A549 (cell line): ENCODE measurements at regions of chr3 and their contacts with region 1.

Region 1: GRCh38 chr3:27681245-27681748 is 40.8 kb downstream of the EOMES start:
- DNase-seq: peak; percentile 80 to 85
- ATAC-seq: peak; percentile 84 to 89
- H3K4me3 ChIP-seq: peak overlapping the region; percentile 35; the same call in 2 of the 3 replicates
- H3K27ac ChIP-seq: peak overlapping the region; percentile 76 to 86
- H3K4me1 ChIP-seq: peaks cover 31% of the 10 kb centered on the region
- CTCF ChIP-seq: peak; percentile 93
- EP300 ChIP-seq: no peak
- POLR2A ChIP-seq: no peak
- RAD21 ChIP-seq: peak; percentile 84 to 92

Region 2: GRCh38 chr3:27366062-27366591 is 315.2 kb before region 1 on chr3:
- CTCF ChIA-PET with region 1: interaction called, 14 read pairs
- POLR2A ChIA-PET with region 1: no interaction called
- DNase-seq: no peak
- ATAC-seq: no peak
- H3K4me3 ChIP-seq: no peak overlapping the region
- H3K27ac ChIP-seq: no peak overlapping the region
- H3K4me1 ChIP-seq: peaks cover 4% of the 10 kb centered on the region
- CTCF ChIP-seq: no peak
- EP300 ChIP-seq: no peak
- POLR2A ChIP-seq: no peak
- RAD21 ChIP-seq: no peak

Region 3: GRCh38 chr3:27484015-27484844 is 197.1 kb before region 1 on chr3 and contains the start of gene SLC4A7:
- CTCF ChIA-PET with region 1: interaction called, 29 read pairs
- POLR2A ChIA-PET with region 1: interaction called, 9 read pairs
- DNase-seq: peak; percentile 87 to 97
- ATAC-seq: peak; percentile 95 to 97
- H3K4me3 ChIP-seq: peak within 1 kb of the TSS; percentile 93
- H3K27ac ChIP-seq: peak within 1 kb of the TSS; percentile 93 to 99
- H3K4me1 ChIP-seq: peaks cover 33% of the 10 kb centered on the region
- CTCF ChIP-seq: no peak
- EP300 ChIP-seq: no peak
- POLR2A ChIP-seq: peak; percentile 98
- RAD21 ChIP-seq: no peak; a peak in 1 of 5 replicates
- polyA plus RNA-seq, gene SLC4A7: 49.1 and 70.2 TPM in 2 replicates

Region 4: GRCh38 chr3:27528791-27529190 is 152.5 kb before region 1 on chr3:
- CTCF ChIA-PET with region 1: interaction called, 31 read pairs
- POLR2A ChIA-PET with region 1: interaction called, 7 read pairs
- DNase-seq: no peak
- ATAC-seq: no peak
- H3K4me3 ChIP-seq: no peak overlapping the region
- H3K27ac ChIP-seq: peak overlapping the region in 1 of 2 experiments; percentile 43; a peak in 3 of 6 replicates
- H3K4me1 ChIP-seq: peaks cover 29% of the 10 kb centered on the region
- CTCF ChIP-seq: no peak
- EP300 ChIP-seq: no peak
- POLR2A ChIP-seq: no peak
- RAD21 ChIP-seq: no peak

Region 5: DNA sequence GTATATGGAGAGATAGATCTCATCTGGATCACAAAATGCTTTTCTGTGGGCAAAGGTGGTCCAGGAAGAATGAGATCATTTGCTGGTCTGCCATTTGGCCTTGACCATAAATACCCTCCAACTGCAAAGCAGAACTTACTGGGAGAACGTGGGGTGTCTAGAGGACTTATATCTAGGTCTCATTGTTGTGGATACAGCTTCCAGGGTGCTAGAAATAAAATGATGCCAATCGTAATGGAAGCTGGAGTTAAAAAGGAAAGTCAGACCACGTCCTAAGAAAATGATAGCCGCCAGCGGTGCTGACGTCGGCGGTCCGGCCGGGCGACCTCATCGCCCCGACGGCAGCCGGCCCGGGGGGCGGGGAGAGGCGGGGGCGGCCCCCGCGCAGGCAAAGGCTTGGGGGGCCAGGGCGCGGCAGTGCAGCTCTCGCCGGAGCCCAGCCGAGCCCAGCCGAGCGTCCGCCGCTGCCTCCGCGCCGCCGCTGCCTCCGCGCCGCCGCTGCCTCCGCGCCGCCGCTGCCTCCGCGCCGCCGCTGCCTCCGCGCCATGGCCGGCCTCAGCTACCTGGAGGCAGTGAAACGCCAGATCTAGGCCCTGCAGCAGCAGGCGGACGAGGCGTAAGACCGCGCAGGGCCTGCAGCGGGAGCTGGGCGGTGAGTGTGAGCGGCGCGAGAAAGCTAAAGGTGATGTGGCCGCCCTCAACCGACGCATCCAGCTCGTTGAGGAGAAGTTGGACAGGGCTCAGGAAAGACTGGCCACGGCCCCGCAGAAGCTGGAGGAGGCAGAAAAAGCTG is 48.7 kb before region 1 on chr3:
- CTCF ChIA-PET with region 1: interaction called, 12 read pairs
- POLR2A ChIA-PET with region 1: interaction called, 8 read pairs
- DNase-seq: peak; percentile 52 to 80
- ATAC-seq: peak; percentile 91 to 94
- H3K4me3 ChIP-seq: peak overlapping the region; percentile 53
- H3K27ac ChIP-seq: peak overlapping the region; percentile 93 to 97
- H3K4me1 ChIP-seq: peaks cover 41% of the 10 kb centered on the region
- CTCF ChIP-seq: no peak
- EP300 ChIP-seq: no peak
- POLR2A ChIP-seq: peak; percentile 43
- RAD21 ChIP-seq: no peak

Region 6: DNA sequence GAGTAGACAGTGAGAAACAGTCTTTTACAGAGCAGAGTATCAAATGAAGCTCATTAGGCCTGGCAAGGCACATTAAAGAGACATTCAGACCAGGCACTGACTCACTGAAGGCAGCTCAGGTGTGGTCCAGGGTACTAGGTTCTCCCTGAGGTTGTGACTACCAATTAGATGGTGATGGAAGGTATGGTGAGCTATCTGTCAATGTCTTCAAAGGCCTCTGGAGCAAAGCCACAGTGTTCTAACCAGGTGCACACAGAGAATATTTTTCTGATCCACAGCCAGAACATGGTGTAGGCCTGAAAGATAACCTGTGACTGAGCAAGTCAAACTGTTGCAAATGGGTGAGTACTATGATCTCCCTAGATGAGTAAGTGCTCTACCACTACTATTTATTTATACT is 10.7 kb before region 1 on chr3:
- CTCF ChIA-PET with region 1: interaction called, 11 read pairs
- POLR2A ChIA-PET with region 1: interaction called, 3 read pairs
- DNase-seq: no peak
- ATAC-seq: 0 out of 6 replicates have a peak, but pooled peaks of 1 of the 2 experiments have one; percentile 19
- H3K4me3 ChIP-seq: no peak overlapping the region
- H3K27ac ChIP-seq: no peak overlapping the region
- H3K4me1 ChIP-seq: peaks cover 13% of the 10 kb centered on the region; the same call in 2 of the 3 replicates
- CTCF ChIP-seq: no peak
- EP300 ChIP-seq: no peak
- POLR2A ChIP-seq: no peak
- RAD21 ChIP-seq: no peak

Region 7: GRCh38 chr3:27840807-27841594 is 159.7 kb after region 1 on chr3:
- CTCF ChIA-PET with region 1: no interaction called
- POLR2A ChIA-PET with region 1: no interaction called
- DNase-seq: no peak
- ATAC-seq: no peak
- H3K4me3 ChIP-seq: no peak overlapping the region
- H3K27ac ChIP-seq: no peak overlapping the region
- H3K4me1 ChIP-seq: no peaks in the 10 kb centered on the region
- CTCF ChIP-seq: no peak
- EP300 ChIP-seq: no peak
- POLR2A ChIP-seq: no peak
- RAD21 ChIP-seq: no peak